ENCODE measurements at regions of chr3 and their contacts with region 1.

Region 1: DNA sequence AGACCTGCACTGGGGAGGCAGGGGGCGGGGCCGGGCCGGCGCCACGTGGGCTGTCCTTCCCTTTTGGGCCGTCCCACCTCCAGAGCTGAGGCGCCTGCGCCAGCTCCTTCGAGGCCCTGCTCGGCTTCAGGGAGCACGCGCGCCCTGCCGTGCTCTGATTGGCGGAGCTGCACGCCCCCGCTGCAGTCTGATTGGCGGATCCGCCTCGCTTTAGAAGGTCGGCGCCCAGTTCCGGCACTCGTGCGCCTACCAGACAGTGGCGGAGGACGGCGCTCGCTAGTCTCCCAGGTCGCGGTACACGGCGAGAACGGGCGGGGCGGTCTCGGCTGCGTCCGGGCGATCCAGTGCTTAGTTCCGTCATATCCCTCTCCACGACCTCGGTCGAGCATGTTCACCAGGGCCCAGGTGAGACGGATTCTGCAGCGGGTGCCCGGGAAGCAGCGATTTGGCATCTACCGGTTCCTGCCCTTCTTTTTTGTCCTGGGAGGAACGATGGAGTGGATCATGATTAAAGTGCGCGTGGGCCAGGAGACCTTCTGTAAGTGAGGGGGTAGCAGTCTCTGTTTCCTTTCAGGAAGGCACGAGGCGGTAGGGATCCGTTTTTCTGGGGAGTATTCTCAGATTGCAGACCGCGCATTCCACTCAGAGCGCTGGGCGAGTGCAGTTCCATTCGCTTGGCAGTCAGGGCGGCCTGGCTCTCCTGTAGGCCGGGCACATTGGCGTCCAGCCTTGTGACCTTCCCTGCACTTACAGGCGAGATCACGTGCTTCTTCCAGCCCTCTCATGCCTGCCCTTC is at the start of gene UQCC5:
- DNase-seq: peak; percentile 97 to 99
- H3K4me3 ChIP-seq: peak within 1 kb of the TSS; percentile 68 to 69
- H3K27ac ChIP-seq: peak within 1 kb of the TSS; percentile 83 to 92
- H3K4me1 ChIP-seq: peaks cover 0 to 74% (median 62%) of the 10 kb centered on the region in 4 donors
- H3K27me3 ChIP-seq: no peaks in the 10 kb centered on the region
- CTCF ChIP-seq: no peak

Region 2: GRCh38 chr3:52323526-52324295 is 212.9 kb before region 1 on chr3:
- intact Hi-C with region 1: no loop called
- DNase-seq: no peak
- H3K4me3 ChIP-seq: no peak overlapping the region
- H3K27ac ChIP-seq: no peak overlapping the region
- H3K4me1 ChIP-seq: no peaks in the 10 kb centered on the region
- H3K27me3 ChIP-seq: no peaks in the 10 kb centered on the region
- CTCF ChIP-seq: no peak

Region 3: GRCh38 chr3:52471371-52472238 is 65.0 kb before region 1 on chr3:
- intact Hi-C with region 1: loop called (anchors 10 kb)
- DNase-seq: peak; percentile 67 to 83
- H3K4me3 ChIP-seq: no peak overlapping the region
- H3K27ac ChIP-seq: no peak overlapping the region
- H3K4me1 ChIP-seq: peaks cover 0 to 17% (median 7%) of the 10 kb centered on the region in 4 donors
- H3K27me3 ChIP-seq: no peaks in the 10 kb centered on the region
- CTCF ChIP-seq: peak; percentile 65 to 66

Measured in tibial artery (tissue), 4 donors.